ENCODE measurements at regions of chr7 and their contacts with region 1.

Region 1: GRCh38 chr7:99374103-99375064 is at the start of gene ARPC1B:
- DNase-seq: peak; percentile 87
- H3K4me3 Mint-ChIP-seq: peak within 1 kb of the TSS; percentile 80
- H3K27ac Mint-ChIP-seq: peak within 1 kb of the TSS; percentile 83
- H3K4me1 Mint-ChIP-seq: peaks cover 48% of the 10 kb centered on the region
- H3K27me3 Mint-ChIP-seq: no peaks in the 10 kb centered on the region
- total RNA-seq, gene ARPC1B: 396 to 397 TPM

Region 2: DNA sequence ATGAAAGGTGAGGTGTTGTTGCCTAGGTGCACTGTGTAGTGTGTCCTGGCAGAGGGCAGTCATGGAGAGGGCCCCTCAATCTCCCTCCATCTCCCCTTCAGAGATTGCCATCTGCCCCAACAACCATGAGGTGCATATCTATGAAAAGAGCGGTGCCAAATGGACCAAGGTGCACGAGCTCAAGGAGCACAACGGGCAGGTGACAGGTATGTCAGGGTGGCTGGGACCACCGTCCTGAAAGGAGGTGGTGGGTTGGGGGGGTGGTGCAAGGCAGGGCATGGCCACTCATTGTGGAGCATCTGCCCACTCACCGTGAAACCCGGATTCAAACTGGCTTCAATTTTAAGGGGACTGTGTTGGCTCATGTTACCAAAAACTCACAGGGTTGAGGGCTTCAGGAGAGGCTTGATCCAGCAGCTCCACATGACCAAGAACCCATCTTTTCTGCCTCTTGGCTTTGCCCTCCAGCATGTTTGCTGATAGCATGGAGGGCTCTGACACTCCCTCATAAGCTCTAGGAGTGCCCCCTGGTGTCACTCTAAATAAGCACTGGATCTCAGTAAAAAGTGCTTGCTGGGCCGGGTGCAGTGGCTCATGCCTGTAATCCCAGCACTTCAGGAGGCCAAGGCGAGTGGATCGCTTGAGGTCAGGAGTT is 12.3 kb after region 1 on chr7:
- CTCF ChIA-PET with region 1: interaction called, 3 read pairs
- POLR2A ChIA-PET with region 1: interaction called, 70 read pairs
- DNase-seq: peak; percentile 50
- H3K4me3 Mint-ChIP-seq: no peak overlapping the region
- H3K27ac Mint-ChIP-seq: peak overlapping the region; percentile 68
- H3K4me1 Mint-ChIP-seq: peaks cover 36% of the 10 kb centered on the region
- H3K27me3 Mint-ChIP-seq: no peaks in the 10 kb centered on the region

Region 3: DNA sequence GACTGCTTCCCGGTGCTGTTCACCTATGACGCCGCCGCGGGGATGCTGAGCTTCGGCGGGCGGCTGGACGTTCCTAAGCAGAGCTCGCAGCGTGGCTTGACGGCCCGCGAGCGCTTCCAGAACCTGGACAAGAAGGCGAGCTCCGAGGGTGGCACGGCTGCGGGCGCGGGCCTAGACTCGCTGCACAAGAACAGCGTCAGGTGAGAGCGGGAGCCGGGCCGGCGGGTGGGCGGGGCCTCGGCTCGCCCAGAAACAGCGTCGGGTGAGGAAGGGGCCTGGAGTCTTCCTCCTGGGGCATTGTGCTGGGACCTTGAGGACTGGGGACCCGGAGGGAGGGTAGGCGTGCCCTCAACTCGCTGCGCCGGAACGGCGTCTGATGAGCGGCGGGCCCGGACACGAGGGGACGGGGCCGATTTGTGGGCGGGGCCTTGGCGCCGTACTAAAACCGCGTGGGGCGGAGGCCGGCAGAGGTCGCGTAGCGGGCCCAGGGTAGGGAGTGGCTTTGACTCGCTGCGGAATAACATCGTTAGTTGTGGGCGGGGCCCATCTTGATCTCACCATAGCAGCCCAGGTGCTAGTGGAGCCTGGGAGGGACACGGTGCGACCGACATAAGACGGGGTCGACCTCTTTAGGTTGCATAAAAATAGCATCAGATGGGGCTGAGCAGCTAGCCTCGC is 18.4 kb after region 1 on chr7:
- CTCF ChIA-PET with region 1: interaction called, 4 read pairs
- POLR2A ChIA-PET with region 1: interaction called, 70 read pairs
- DNase-seq: peak; percentile 85
- H3K4me3 Mint-ChIP-seq: peak overlapping the region; percentile 60
- H3K27ac Mint-ChIP-seq: peak overlapping the region; percentile 85
- H3K4me1 Mint-ChIP-seq: peaks cover 33% of the 10 kb centered on the region
- H3K27me3 Mint-ChIP-seq: no peaks in the 10 kb centered on the region